Naive thymus-derived CD4-positive, alpha-beta T cell (primary cell): ENCODE measurements at regions of chr15 and their contacts with region 1.

Region 1: GRCh38 chr15:52217186-52217585 is 26.0 kb upstream of the GNB5 start:
- DNase-seq: no peak
- ATAC-seq: no peak
- H3K4me3 ChIP-seq: no peak overlapping the region
- H3K4me3 Mint-ChIP-seq: no peak overlapping the region
- H3K27ac ChIP-seq: no peak overlapping the region
- H3K27ac Mint-ChIP-seq: no peak overlapping the region
- H3K4me1 ChIP-seq: peaks cover 5 to 9% of the 10 kb centered on the region in 2 donors
- H3K4me1 Mint-ChIP-seq: peaks cover 9 to 28% (median 16%) of the 10 kb centered on the region in 7 donors
- H3K27me3 ChIP-seq: no peaks in the 10 kb centered on the region
- H3K27me3 Mint-ChIP-seq: no peaks in the 10 kb centered on the region

Region 2: GRCh38 chr15:51955504-51956101 is 261.6 kb before region 1 on chr15:
- CTCF ChIA-PET with region 1: no interaction called
- POLR2A ChIA-PET with region 1: no interaction called
- intact Hi-C with region 1: no loop called
- DNase-seq: no peak
- ATAC-seq: no peak
- H3K4me3 ChIP-seq: no peak overlapping the region
- H3K4me3 Mint-ChIP-seq: no peak overlapping the region
- H3K27ac ChIP-seq: no peak overlapping the region
- H3K27ac Mint-ChIP-seq: peak overlapping the region in 1 of 9 donors; percentile 26
- H3K4me1 ChIP-seq: no peaks in the 10 kb centered on the region
- H3K4me1 Mint-ChIP-seq: peaks cover 0 to 6% (median 0%) of the 10 kb centered on the region in 7 donors
- H3K27me3 ChIP-seq: no peaks in the 10 kb centered on the region
- H3K27me3 Mint-ChIP-seq: no peaks in the 10 kb centered on the region

Region 3: GRCh38 chr15:52093539-52094502 is 123.4 kb before region 1 on chr15:
- CTCF ChIA-PET with region 1: no interaction called
- POLR2A ChIA-PET with region 1: no interaction called
- intact Hi-C with region 1: no loop called
- DNase-seq: no peak
- ATAC-seq: no peak
- H3K4me3 ChIP-seq: no peak overlapping the region
- H3K4me3 Mint-ChIP-seq: no peak overlapping the region
- H3K27ac ChIP-seq: no peak overlapping the region
- H3K27ac Mint-ChIP-seq: no peak overlapping the region
- H3K4me1 ChIP-seq: no peaks in the 10 kb centered on the region
- H3K4me1 Mint-ChIP-seq: no peaks in the 10 kb centered on the region
- H3K27me3 ChIP-seq: no peaks in the 10 kb centered on the region
- H3K27me3 Mint-ChIP-seq: peaks cover 0 to 18% (median 5%) of the 10 kb centered on the region in 5 donors

Region 4: GRCh38 chr15:52146776-52147175 is 70.4 kb before region 1 on chr15:
- CTCF ChIA-PET with region 1: no interaction called
- POLR2A ChIA-PET with region 1: no interaction called
- intact Hi-C with region 1: no loop called
- DNase-seq: no peak
- ATAC-seq: no peak
- H3K4me3 ChIP-seq: no peak overlapping the region
- H3K4me3 Mint-ChIP-seq: no peak overlapping the region
- H3K27ac ChIP-seq: no peak overlapping the region
- H3K27ac Mint-ChIP-seq: no peak overlapping the region
- H3K4me1 ChIP-seq: no peaks in the 10 kb centered on the region
- H3K4me1 Mint-ChIP-seq: peaks cover 0 to 1% (median 0%) of the 10 kb centered on the region in 7 donors
- H3K27me3 ChIP-seq: no peaks in the 10 kb centered on the region
- H3K27me3 Mint-ChIP-seq: no peaks in the 10 kb centered on the region

Region 5: GRCh38 chr15:52234596-52235541 is 17.7 kb after region 1 on chr15:
- CTCF ChIA-PET with region 1: interaction called, 4 read pairs
- POLR2A ChIA-PET with region 1: interaction called, 11 read pairs
- intact Hi-C with region 1: no loop called
- DNase-seq: peak in 6 of 9 donors; percentile 27 to 55 (median 51)
- ATAC-seq: peak; percentile 82
- H3K4me3 ChIP-seq: no peak overlapping the region
- H3K4me3 Mint-ChIP-seq: peak overlapping the region; percentile 39 to 83 (median 73)
- H3K27ac ChIP-seq: peak overlapping the region; percentile 71
- H3K27ac Mint-ChIP-seq: peak overlapping the region; percentile 68 to 98 (median 96)
- H3K4me1 ChIP-seq: peaks cover 0 to 29% of the 10 kb centered on the region in 2 donors
- H3K4me1 Mint-ChIP-seq: peaks cover 23 to 58% (median 46%) of the 10 kb centered on the region in 7 donors
- H3K27me3 ChIP-seq: no peaks in the 10 kb centered on the region
- H3K27me3 Mint-ChIP-seq: no peaks in the 10 kb centered on the region

Region 6: DNA sequence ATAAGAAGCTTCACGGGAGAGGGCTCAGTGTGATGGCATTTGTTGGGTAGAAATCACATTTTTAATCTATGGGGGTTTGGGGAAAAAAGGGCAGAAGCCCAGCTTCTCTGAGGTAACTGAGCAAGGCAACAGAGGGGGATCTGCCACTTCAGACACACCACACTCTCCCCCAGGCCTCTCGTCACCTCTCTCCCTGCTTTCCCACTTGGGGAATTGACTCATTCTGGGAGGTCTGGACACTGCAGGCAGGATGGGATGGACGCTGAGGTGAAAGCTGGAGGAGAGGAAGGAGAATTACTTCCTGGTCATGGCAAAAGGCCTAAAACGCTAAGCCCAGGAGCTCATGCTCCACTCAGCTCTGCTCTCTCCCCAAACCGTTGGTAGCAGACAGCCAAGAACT is 45.2 kb after region 1 on chr15:
- CTCF ChIA-PET with region 1: no interaction called
- POLR2A ChIA-PET with region 1: no interaction called
- intact Hi-C with region 1: no loop called
- DNase-seq: no peak
- ATAC-seq: no peak
- H3K4me3 ChIP-seq: no peak overlapping the region
- H3K4me3 Mint-ChIP-seq: peak overlapping the region; percentile 49 to 70 (median 65)
- H3K27ac ChIP-seq: no peak overlapping the region
- H3K27ac Mint-ChIP-seq: peak overlapping the region; percentile 16 to 90 (median 71)
- H3K4me1 ChIP-seq: peaks cover 16 to 28% of the 10 kb centered on the region in 2 donors
- H3K4me1 Mint-ChIP-seq: peaks cover 27 to 48% (median 32%) of the 10 kb centered on the region in 7 donors
- H3K27me3 ChIP-seq: no peaks in the 10 kb centered on the region
- H3K27me3 Mint-ChIP-seq: no peaks in the 10 kb centered on the region